ENCODE measurements at regions of chr1 and their contacts with region 1.

Region 1: DNA sequence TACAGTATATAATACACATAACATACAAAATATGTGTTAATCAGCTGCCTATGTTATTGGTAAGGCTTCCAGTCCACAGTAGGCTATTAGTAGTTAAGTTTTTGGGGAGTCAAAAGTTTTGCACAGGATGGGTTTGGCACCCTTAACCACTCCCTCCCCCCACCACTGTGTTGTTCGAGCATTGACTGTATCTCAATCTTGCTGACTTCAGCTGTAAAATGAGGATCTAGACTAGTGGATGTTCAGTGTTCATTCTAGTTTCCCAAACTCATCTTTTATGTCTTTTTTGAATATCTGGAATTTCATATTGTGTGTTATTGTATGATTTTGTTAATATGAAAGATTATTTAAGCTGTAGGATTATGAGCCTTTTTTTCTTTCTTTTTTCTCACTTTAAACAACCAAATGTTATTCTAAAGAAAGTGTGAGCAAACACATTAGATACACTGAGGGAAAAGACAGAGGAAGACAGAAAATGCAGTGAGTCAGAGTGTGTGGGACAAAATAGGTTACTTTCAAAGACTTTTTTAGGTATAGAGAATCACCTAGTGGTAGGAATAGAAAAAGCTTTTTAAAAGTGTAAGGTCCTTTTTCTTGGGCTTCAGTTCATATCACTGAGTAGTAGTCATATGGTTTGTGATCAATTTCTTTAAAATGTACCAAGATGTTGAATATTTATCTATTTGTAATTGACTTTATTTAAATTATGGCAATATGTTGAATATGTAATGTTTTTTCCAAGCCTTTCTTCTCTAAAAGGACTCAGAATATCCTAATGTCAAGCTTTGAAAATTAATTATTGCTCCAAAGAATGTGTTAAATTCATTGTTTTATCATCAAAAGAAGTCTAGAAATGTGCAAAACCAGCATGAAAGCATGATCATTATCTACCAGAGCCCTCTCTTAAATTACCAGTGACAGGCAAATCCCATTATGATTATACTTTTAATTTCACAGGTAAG is 17.9 kb upstream of the CENPF start:
- DNase-seq: no peak
- H3K4me3 ChIP-seq: no peak overlapping the region
- H3K27ac ChIP-seq: no peak overlapping the region
- H3K4me1 ChIP-seq: no peaks in the 10 kb centered on the region
- CTCF ChIP-seq: peak; percentile 76

Region 2: GRCh38 chr1:214213136-214213535 is 371.9 kb before region 1 on chr1:
- CTCF ChIA-PET with region 1: no interaction called
- POLR2A ChIA-PET with region 1: no interaction called
- intact Hi-C with region 1: loop called (anchors 5 kb)
- DNase-seq: no peak
- H3K4me3 ChIP-seq: no peak overlapping the region
- H3K27ac ChIP-seq: no peak overlapping the region
- H3K4me1 ChIP-seq: no peaks in the 10 kb centered on the region
- CTCF ChIP-seq: no peak

Region 3: DNA sequence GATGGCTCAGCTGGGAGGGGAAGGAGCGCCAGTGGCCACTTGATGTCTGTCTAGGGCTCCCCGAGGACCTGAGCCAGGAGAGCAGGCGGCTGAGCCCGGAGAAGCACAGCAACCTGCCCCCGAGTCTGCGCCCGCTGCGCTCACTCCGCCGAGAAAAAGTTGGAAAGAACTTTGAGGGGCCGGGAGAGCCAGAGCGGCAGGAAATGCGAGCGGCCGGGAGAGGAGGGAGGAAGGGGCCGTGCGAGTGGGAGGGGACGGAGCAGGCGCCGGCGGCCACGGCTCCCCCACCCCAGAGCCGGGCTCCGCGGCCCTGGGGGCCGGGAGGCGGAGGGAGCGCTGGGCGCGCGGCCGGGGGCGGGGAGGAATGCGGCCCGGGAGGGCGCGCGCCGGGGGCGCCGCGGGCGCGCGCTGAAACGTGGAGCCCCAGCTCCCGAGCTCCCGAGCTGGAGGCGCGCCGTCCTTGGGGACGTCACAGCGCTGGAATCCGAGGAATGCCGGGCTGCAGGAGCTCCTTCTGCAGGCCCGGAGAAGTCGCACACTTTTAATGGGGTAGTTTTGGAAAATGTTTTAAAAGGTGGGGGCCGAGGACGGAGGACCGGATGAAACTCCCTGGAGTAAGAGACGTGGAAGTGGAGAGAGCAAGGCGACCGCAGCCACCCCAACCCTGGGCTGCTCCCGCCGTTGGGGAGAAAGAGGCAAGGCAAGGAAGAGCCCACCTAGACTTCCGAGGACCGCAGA is 33.5 kb before region 1 on chr1 and contains the start of gene PTPN14:
- CTCF ChIA-PET with region 1: no interaction called
- POLR2A ChIA-PET with region 1: no interaction called
- intact Hi-C with region 1: no loop called
- DNase-seq: no peak
- H3K4me3 ChIP-seq: no peak within 1 kb of the TSS
- H3K27ac ChIP-seq: no peak within 1 kb of the TSS
- H3K4me1 ChIP-seq: no peaks in the 10 kb centered on the region
- CTCF ChIP-seq: no peak
- total RNA-seq, gene PTPN14: not detected in 2 replicates

Region 4: DNA sequence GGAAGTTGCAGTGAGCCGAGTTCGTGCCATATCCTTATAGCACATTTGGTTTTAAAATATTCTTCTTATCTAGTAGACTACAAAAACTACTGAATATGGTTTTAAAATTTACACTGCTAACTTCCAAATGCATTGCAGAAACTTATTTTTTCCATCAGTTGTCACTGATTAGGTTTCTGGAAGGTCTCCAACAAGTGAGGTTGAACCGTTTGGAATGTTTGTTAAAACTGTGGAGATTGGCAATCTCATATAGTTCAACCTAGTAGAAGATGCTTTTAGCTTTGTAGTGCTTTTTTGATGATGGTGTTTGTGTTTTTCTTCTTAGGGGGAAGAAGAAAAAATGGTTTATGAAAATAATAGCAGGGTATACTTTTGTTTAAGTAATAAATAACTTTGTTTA is 30.8 kb after region 1 on chr1:
- CTCF ChIA-PET with region 1: no interaction called
- POLR2A ChIA-PET with region 1: no interaction called
- intact Hi-C with region 1: no loop called
- DNase-seq: no peak
- H3K4me3 ChIP-seq: no peak overlapping the region
- H3K27ac ChIP-seq: no peak overlapping the region
- H3K4me1 ChIP-seq: no peaks in the 10 kb centered on the region
- CTCF ChIP-seq: no peak

Measured in OCI-LY7 (cell line).